Motor neuron (in vitro differentiated cells): ENCODE measurements at regions of chr5 and their contacts with region 1.

Region 1: DNA sequence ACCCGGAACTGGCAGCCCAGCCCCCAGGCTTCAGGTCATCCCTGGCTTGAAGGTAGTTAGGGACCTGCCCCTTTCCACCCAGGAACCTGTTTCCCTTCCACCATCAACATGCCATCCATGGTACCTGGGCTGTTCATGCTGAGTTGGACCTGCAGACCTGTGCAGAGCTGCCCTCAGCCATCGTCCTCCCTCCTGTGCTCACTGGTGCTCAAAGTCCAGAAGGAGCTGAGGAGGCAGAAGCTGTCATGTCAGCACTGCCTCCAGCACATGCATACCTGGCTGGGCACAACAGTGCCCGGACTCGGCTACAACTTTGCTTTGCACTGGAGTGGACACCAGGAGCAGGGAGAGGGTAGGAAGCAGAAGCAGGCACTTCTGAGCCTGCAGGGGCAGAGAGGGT is 36.2 kb downstream of the BTNL8 start:
- ATAC-seq: no peak
- H3K4me3 ChIP-seq: no peak overlapping the region
- H3K27ac ChIP-seq: no peak overlapping the region
- H3K4me1 ChIP-seq: no peaks in the 10 kb centered on the region

Region 2: DNA sequence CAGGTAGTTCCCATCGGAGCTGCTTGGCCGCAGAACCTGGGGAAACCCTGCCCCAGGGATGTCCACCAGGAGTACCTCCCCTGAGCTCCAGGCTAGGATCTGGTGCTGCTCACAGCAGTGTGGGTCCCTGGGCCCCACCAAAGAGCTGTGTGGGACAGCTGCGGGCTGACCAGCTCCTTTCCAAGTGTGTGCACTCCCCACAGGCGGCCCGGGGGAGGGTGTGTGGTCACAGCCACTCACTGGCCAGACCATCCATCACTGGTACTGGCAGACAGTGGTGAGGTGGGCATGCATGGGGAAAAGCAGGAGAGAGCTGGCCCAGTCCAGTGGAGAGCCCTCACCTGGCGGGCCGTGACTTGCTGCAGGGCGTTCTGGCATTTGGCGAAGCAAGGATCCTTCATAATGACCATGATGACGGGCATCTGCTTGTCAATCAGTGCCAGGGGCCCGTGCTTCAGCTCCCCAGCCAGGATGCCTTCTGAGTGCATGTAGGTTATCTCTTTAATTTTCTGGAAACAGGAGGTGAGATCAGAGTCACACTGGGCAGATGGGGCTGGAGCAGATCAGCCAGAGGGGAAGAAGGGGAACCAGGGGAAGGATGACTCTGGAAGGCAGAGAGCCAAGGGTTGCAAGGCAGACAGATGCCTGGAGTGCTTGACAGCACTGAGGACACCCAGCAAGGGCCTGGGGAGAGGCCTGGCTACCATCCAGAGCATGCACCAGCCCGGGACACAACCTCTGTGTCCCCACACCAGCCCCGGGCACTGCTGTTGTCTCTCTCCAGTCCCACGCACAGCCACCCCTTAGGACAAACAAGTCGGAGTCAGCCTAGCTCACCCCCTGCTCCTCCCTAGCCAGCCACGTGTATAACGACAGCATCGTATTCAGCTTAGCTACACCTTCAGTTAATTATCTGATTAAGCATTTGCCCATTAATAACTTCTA is 630.5 kb before region 1 on chr5:
- in situ Hi-C with region 1: no loop called
- ATAC-seq: no peak
- H3K4me3 ChIP-seq: no peak overlapping the region
- H3K27ac ChIP-seq: no peak overlapping the region
- H3K4me1 ChIP-seq: no peaks in the 10 kb centered on the region

Region 3: GRCh38 chr5:180784497-180785097 is 150.6 kb before region 1 on chr5:
- in situ Hi-C with region 1: no loop called
- ATAC-seq: peak; percentile 50 to 83 (median 60)
- H3K4me3 ChIP-seq: no peak overlapping the region
- H3K27ac ChIP-seq: no peak overlapping the region
- H3K4me1 ChIP-seq: peaks cover 10 to 15% of the 10 kb centered on the region in 2 donors

Region 4: DNA sequence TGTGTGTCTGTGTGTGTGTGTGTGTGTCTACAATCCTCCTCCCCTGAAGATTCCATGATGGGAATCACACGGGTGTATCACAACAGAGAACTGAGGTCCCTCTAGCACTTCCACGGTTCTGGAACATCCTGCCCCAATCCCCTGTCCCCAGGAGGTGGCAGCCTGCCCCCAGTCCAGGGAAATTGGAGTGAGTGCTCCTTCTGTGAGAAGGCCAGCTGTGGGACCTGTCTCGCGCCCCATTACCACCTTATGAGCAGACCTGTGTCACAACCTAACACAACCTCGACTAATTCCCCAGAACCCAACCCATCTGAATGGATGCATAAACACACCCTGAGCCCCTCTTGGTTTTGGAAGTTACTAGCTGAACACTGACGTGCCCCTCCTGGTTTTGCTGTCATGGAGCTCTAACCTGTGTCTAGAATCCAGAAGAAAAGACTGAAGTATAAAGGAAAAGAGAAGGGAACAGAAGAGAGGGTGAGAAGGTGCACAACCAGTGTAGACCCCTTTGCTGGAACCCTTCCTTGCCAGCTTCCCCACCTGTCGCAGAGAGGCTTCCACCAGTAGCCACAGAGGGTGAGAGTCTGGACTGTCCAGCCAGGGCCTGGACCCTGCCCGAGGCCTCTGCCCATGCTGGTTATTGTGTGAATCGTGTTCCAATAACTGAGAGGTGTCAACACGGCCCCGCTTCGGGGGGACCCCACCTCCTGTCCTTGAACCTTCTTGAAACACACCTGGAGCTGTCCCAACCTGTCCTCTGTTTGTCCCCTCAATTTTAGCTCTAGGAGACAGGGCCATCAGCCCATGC is 108.3 kb after region 1 on chr5:
- in situ Hi-C with region 1: loop called in 1 of 9 experiments (anchors 25 kb)
- ATAC-seq: peak in 1 of 8 experiments; percentile 50
- H3K4me3 ChIP-seq: no peak overlapping the region
- H3K27ac ChIP-seq: no peak overlapping the region
- H3K4me1 ChIP-seq: no peaks in the 10 kb centered on the region